ENCODE measurements at regions of chr9 and their contacts with region 1.

Region 1: DNA sequence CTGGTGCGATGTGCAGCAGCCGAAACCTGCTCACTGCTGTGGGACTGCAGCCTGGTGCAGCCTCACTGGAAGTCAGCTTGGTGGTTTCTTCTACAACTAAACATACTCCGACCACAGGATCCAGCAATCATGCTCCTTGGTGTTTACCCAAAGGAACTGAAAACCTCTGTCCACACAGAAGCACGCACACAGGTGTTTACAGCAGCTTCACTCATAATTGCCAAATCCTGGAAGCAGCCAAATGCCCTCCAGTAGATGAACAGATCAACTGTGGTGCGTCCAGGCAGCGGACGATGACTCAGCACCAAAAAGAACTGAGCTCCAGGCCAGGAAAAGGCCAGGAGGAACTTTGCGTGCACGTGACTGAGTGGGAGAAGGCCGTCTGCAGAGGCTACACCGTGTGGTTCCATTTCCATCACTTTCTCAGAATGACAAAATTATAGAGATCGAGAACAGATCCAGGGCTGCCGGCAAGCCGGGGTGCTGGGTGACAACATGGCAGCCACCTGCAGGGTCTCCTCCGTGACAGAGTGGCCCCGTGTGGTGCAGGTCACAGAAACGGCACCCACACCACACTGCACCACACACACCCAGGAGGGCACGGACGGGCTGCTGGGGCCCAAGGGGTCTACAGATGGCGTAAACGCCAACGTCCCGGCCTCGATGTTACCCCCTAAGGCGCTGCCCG is 23.1 kb upstream of the NSMF start:
- DNase-seq: peak; percentile 94
- ATAC-seq: peak; percentile 91
- H3K4me3 ChIP-seq: no peak overlapping the region
- H3K27ac ChIP-seq: peak overlapping the region; percentile 89
- H3K4me1 ChIP-seq: peaks cover 24% of the 10 kb centered on the region
- H3K27me3 ChIP-seq: no peaks in the 10 kb centered on the region
- CTCF ChIP-seq: no peak

Region 2: DNA sequence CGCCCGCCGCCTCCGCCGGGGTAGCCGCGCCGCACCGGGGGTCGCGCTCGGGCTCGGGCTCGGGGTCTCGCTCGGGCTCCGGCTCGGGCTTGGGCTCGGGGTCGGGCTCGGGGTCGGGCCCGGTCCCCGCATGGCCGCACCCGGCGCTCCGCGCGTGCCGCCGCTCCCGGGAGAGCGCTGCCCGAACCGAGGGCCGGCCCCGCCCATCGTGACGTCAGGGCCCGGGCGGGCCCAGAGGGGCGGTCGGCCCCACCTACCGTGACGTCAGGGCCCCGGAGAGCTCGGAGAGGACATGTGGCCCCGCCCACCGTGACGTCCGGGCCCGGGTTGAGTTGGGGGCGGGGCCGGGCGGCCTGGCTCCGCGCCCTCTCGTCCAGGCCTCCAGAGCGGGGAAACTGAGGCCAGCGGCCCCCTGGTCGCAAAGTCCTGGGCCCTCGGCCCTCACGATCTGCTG is 23.1 kb before region 1 on chr9 and contains the start of gene NSMF:
- CTCF ChIA-PET with region 1: interaction called, 3 read pairs
- POLR2A ChIA-PET with region 1: no interaction called
- intact Hi-C with region 1: loop called (anchors 2 kb)
- DNase-seq: peak; percentile 91
- ATAC-seq: peak; percentile 90
- H3K4me3 ChIP-seq: peak within 1 kb of the TSS; percentile 82
- H3K27ac ChIP-seq: peak within 1 kb of the TSS; percentile 26; the same call in 1 of the 2 replicates
- H3K4me1 ChIP-seq: peaks cover 4% of the 10 kb centered on the region; the same call in 1 of the 2 replicates
- H3K27me3 ChIP-seq: no peaks in the 10 kb centered on the region
- CTCF ChIP-seq: no peak
- total RNA-seq, gene NSMF: 29.5 and 30.8 TPM in 2 replicates

Measured in PC-3 (cell line).